ENCODE measurements at regions of chrX and their contacts with region 1.

Region 1: DNA sequence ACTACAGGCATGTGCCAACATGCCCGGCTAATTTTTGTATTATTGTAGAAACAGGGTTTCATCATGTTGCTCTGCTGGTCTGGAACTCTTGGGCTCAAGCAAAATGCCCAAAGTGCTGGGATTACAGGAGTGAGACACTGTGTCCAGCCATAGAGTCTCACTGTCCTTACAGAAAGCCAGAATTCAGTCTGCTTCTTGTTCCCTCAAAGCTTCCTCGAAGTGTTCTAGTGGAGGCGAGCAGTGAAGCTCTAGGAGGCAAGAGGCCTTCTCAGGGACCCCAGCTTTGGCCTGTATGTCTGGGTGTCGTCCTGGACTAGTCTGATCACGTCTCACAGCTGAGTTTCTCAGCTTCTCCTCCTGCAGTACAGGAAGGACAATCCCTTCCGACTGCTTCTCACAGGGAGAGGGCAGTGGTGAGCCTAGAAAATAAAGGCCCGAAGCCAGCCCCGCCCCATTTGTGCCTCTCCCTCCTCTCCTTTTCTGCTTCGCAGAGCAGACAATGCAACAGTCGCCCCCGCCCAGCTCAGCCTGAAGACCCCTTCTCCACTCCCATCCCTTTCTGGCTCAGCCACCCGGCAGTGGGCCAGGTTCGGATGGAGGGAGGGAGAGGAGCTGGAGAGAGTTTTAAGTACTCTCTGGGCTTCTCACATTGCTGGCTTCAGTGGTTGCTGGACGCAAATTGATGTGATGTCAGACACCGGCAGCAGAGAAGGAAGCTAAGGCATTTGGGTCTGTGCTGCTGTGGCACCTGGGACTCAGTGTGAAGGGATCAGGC is 11.1 kb upstream of the FAM3A start:
- DNase-seq: peak; percentile 73
- H3K4me3 Mint-ChIP-seq: no peak overlapping the region
- H3K27ac Mint-ChIP-seq: peak overlapping the region; percentile 53
- H3K4me1 Mint-ChIP-seq: peaks cover 23% of the 10 kb centered on the region
- H3K27me3 Mint-ChIP-seq: no peaks in the 10 kb centered on the region

Region 2: GRCh38 chrX:154515878-154516655 is 11.0 kb before region 1 on chrX and contains the start of gene FAM3A:
- CTCF ChIA-PET with region 1: interaction called, 21 read pairs
- POLR2A ChIA-PET with region 1: interaction called, 7 read pairs
- DNase-seq: peak; percentile 94
- H3K4me3 Mint-ChIP-seq: peak within 1 kb of the TSS; percentile 80
- H3K27ac Mint-ChIP-seq: peak within 1 kb of the TSS; percentile 81
- H3K4me1 Mint-ChIP-seq: peaks cover 30% of the 10 kb centered on the region
- H3K27me3 Mint-ChIP-seq: no peaks in the 10 kb centered on the region
- total RNA-seq, gene FAM3A: 24.9 to 29.0 TPM